ENCODE measurements at regions of chr14 and their contacts with region 1.

Region 1: DNA sequence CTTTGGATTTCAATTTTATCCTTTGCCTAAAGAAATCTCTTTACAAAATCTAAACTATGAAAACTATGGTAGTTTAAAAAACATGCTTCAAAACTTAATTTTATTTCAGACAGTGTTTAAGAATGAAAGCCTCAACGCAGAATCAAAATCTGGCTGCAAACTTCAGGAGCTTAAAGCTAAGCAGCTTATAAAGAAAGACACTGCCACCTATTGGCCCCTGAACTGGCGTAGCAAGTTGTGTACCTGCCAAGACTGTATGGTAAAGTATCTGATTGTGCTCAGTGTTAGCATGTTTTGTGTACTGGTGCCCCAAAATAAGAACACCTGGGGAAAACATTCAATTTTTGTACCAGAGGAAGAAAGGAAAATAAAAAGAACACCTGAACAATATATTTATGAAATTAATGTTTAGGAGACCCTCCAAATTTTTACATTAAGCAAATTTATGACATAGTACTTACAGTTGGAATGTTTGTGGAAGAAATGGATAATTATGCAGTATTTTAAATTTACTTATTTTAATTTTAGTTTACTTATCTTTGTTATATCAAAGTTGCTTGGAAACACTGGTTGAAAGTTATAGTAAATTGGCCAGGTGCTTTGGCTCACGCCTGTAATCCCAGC is 12.2 kb downstream of the UBR7 start:
- DNase-seq: peak in 1 of 2 donors; percentile 36
- H3K4me3 ChIP-seq: no peak overlapping the region
- CTCF ChIP-seq: no peak
- POLR2A ChIP-seq: no peak

Region 2: DNA sequence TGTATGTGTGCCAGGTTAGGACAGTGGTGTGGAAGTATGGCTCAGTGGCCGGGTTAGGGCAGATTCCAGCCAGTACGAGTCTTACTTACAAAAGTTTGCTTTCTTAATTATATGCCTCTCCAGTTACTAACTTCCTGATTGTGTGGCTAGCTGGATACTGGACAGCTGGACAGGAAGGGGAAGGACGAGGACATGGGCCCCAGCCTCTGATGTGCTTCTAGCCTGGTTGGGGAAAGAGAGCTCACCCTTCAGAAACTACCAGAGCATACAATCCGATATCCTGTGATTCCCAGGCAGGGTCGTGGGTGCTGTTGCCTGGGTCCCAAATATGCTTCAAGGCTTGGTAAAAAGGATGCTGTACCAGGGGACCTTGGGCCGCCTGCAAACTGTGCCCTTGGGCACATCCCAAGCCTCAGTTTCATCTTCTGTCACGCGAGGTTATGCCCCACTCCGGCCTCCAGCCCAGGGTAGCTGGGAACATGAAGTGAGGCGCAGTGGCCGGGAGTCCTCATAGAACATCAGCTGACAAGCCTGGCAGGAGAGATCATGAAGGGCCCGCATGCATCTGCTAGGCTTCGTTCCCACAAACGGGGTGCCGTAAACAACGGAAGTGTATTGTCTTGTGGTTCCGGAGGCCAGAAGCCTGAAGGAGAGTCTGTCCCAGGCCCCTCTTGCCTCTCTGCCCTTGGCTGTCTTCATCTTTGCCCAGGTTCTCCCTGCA is 728.8 kb before region 1 on chr14:
- intact Hi-C with region 1: no loop called
- DNase-seq: peak in 1 of 2 donors; percentile 77
- H3K4me3 ChIP-seq: no peak overlapping the region
- CTCF ChIP-seq: no peak
- POLR2A ChIP-seq: no peak

Region 3: GRCh38 chr14:93115069-93115820 is 104.0 kb before region 1 on chr14:
- intact Hi-C with region 1: loop called (anchors 10 kb)
- DNase-seq: peak; percentile 67 to 95
- H3K4me3 ChIP-seq: peak overlapping the region; percentile 59
- CTCF ChIP-seq: no peak
- POLR2A ChIP-seq: no peak